Prostate gland (tissue), 2 donors: ENCODE measurements at regions of chr2 and their contacts with region 1.

Region 1: GRCh38 chr2:72993147-72993932 is 76.0 kb downstream of the EMX1 start:
- DNase-seq: no peak
- H3K4me3 ChIP-seq: no peak overlapping the region
- H3K27ac ChIP-seq: no peak overlapping the region
- H3K4me1 ChIP-seq: no peaks in the 10 kb centered on the region
- H3K27me3 ChIP-seq: no peaks in the 10 kb centered on the region
- CTCF ChIP-seq: peak; percentile 61 to 78 (median 68)
- POLR2A ChIP-seq: no peak

Region 2: DNA sequence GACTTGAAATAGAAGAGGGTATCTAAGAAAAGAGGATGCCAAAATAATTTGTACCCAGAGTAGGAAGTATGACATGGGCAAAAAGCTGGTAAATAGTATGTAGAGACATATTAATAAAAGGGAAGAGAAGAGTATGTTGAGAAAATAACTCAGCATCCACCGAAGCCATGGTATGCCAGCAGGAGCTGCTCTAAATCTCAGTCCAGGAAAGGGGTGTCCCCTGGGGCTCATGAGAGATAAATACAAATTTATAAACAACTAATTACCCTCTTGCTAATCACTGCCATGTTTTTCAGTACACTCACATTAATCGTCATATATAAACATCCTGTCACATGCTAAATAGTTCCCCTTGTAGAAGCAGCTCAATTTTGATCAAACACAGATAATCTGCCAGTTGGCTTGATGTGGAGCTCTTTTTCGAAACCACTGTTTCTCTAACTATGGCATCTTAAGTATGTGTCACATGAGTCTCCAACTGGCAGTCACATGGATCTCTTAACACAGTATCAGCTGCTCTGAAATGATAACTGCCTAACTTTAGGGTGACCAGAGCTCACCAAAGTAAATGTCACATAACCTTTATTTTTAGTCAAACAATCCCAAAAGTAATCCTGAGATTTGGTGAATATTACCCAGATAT is 199.4 kb before region 1 on chr2:
- intact Hi-C with region 1: no loop called
- DNase-seq: no peak
- H3K4me3 ChIP-seq: no peak overlapping the region
- H3K27ac ChIP-seq: no peak overlapping the region
- H3K4me1 ChIP-seq: no peaks in the 10 kb centered on the region
- H3K27me3 ChIP-seq: no peaks in the 10 kb centered on the region
- CTCF ChIP-seq: no peak
- POLR2A ChIP-seq: no peak

Region 3: DNA sequence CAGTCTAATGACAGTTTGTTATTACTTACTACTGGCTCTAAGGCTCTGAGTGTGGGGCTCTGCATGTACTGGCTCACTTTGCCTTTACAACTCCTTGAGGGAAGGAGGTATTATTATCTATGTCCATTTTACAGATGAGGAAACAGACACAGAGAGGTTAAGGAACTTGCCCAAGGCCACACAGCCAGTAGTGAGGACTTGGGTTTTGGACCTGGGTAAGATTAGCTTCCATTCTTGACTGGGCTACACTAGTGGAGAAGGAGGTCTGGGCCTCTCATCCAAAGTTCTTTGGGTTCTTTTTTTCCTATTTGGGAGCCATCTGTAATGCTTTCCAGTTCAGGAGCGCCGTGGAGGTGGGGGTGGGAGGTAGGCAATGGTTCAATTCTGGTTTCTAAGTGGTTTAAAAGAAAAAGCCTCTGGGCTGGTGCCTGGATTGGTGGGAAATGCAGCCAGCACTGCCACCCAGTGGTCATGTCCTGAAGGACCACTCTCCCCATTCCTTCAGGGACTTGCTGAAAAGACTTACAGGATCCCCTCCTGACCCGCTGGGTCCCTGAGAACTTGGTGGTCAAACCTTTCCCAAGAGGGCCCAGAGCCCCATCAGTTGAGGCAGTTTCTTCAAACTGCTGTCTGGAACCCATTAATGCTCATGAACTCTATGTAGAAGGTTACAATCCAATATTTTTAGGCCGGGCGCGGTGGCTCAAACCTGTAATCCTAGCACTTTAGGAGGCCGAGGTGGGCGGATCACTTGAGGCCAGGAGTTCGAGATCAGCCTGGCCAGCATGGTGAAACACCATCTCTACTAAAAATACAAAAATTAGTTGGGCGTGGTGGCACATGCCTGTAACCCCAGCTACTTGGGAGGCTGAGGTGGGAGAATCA is 170.4 kb after region 1 on chr2:
- intact Hi-C with region 1: loop called (anchors 5 kb)
- DNase-seq: peak; percentile 30
- H3K4me3 ChIP-seq: no peak overlapping the region
- H3K27ac ChIP-seq: no peak overlapping the region
- H3K4me1 ChIP-seq: no peaks in the 10 kb centered on the region
- H3K27me3 ChIP-seq: no peaks in the 10 kb centered on the region
- CTCF ChIP-seq: peak; percentile 31 to 82 (median 78)
- POLR2A ChIP-seq: no peak